PC-3 (cell line): ENCODE measurements at regions of chr1 and their contacts with region 1.

Region 1: GRCh38 chr1:37514350-37515184 is at the start of gene MEAF6:
- DNase-seq: peak; percentile 88
- ATAC-seq: peak; percentile 94
- H3K4me3 ChIP-seq: peak within 1 kb of the TSS; percentile 79
- H3K27ac ChIP-seq: peak within 1 kb of the TSS; percentile 76
- H3K4me1 ChIP-seq: peaks cover 19% of the 10 kb centered on the region
- H3K27me3 ChIP-seq: no peaks in the 10 kb centered on the region
- CTCF ChIP-seq: peak; percentile 71
- total RNA-seq, gene MEAF6: 87.0 and 90.9 TPM in 2 replicates

Region 2: GRCh38 chr1:37465593-37466517 is 48.7 kb before region 1 on chr1:
- CTCF ChIA-PET with region 1: no interaction called
- POLR2A ChIA-PET with region 1: no interaction called
- intact Hi-C with region 1: no loop called
- DNase-seq: no peak
- ATAC-seq: peak; percentile 43; the same call in 1 of the 2 replicates
- H3K4me3 ChIP-seq: no peak overlapping the region
- H3K27ac ChIP-seq: no peak overlapping the region
- H3K4me1 ChIP-seq: no peaks in the 10 kb centered on the region
- H3K27me3 ChIP-seq: no peaks in the 10 kb centered on the region
- CTCF ChIP-seq: no peak

Region 3: DNA sequence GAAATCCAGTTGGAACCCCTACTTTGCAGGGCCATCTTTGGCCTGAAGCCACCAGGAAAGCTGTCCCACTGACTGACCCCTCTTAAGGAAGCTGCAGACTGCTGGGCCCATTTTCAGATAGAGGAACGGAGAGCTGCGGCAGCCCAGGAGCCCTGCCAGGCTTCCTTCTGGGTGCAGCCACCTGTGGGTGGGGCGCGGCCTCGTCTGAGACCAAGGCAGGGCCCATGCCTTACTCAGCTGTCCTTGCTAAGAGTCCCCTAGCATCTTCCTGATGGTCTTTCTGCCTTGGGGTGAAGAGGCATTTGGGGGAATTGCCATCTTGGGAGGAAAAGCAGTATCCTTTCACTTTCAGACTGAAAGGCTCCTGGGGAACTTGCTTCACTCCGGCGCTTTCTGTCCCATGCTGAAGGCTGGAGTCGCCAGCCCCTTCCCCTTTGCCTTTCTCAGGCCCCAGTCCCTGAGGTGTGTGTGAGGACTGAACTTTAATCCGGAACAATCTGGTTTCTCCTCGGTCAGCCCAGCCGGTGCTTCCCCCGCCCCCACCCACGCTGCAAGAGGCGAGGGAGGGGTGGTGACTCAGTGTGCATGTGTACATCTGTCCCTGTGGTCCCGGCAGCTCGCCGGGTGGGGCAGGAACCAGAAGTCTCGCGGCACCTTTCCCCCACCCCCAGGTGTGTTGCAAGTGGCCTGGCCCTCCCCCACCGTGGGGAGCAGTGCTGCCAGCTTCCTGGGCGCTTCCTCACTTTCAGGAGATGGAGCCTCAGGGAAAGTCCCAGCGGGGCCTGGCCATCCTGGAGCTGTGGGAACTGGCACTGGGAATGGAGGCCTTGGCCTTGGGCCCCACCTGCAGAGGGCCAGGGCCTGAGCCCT is 35.1 kb before region 1 on chr1:
- CTCF ChIA-PET with region 1: no interaction called
- POLR2A ChIA-PET with region 1: interaction called, 4 read pairs
- intact Hi-C with region 1: loop called (anchors 2 kb)
- DNase-seq: peak; percentile 98
- ATAC-seq: peak; percentile 42
- H3K4me3 ChIP-seq: peak overlapping the region; percentile 71
- H3K27ac ChIP-seq: peak overlapping the region; percentile 97
- H3K4me1 ChIP-seq: peaks cover 58% of the 10 kb centered on the region
- H3K27me3 ChIP-seq: no peaks in the 10 kb centered on the region
- CTCF ChIP-seq: no peak

Region 4: DNA sequence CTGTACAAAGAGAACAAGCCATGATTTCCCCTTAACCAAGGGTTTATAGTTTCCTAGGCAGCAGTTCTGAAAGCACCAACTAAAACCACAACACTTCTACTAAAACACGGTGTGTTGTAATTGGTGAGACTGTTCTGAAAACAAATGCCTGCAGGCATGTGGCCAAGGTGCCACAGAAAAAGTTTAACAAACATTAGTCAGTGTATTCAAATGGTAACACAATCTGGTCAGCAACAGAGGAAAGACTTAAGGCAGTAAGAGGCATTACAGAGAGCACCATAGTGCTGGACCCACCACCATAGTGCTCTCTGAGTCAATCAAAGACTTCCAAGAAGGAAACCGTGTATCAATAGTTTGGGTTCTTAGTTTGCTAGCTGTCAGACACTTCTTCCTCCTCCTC is 22.8 kb after region 1 on chr1:
- CTCF ChIA-PET with region 1: interaction called, 4 read pairs
- POLR2A ChIA-PET with region 1: no interaction called
- intact Hi-C with region 1: loop called (anchors 2 kb)
- DNase-seq: peak; percentile 94
- ATAC-seq: peak; percentile 80
- H3K4me3 ChIP-seq: no peak overlapping the region
- H3K27ac ChIP-seq: peak overlapping the region; percentile 56
- H3K4me1 ChIP-seq: peaks cover 46% of the 10 kb centered on the region
- H3K27me3 ChIP-seq: no peaks in the 10 kb centered on the region
- CTCF ChIP-seq: no peak

Region 5: DNA sequence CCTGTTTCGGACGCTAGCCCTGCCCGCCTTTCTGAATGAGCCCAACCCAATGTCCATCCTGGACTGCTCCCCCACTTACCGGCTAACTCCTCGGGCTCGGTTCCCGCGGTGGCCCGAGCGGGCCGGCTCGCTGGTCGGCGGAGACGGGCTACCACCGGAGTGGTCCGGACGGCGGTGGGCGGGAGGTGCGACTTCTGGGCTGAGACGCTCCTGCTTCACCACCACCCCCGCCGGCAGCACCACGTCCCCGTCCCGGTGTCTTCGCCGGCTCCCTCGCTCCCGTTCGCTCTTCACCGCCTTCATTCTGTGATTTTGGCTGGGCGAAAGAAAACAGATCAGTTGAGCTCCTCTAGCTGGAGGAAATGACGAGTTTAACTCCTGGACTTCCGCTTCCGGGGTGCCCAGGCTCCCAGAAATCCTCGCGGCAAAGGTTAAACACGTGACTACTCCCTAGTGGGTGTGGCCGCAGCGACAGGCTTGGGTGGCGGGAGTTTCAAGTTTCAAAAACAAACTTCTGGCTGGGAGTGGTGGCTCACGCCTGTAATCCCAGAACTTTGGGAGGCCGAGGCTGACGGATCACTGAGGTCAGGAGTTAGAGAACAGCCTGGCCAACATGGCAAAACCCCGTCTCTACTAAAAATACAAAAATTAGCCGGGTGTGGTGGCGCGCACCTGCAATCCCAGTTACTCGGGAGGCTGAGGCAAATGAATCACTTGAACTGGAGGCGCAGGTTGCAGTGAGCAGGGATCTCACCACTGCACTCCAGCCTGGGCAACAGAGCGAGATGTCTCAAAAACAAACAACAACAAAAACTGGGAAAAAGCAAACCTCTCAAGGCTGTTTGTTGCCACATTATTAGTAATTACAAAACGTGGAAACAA is 39.6 kb after region 1 on chr1 and contains the start of gene SNIP1:
- CTCF ChIA-PET with region 1: interaction called, 10 read pairs
- POLR2A ChIA-PET with region 1: no interaction called
- intact Hi-C with region 1: no loop called
- DNase-seq: peak; percentile 94
- ATAC-seq: peak; percentile 93
- H3K4me3 ChIP-seq: peak within 1 kb of the TSS; percentile 100
- H3K27ac ChIP-seq: peak within 1 kb of the TSS; percentile 59
- H3K4me1 ChIP-seq: peaks cover 20% of the 10 kb centered on the region
- H3K27me3 ChIP-seq: no peaks in the 10 kb centered on the region
- CTCF ChIP-seq: no peak
- total RNA-seq, gene SNIP1: 23.1 and 36.0 TPM in 2 replicates

Region 6: DNA sequence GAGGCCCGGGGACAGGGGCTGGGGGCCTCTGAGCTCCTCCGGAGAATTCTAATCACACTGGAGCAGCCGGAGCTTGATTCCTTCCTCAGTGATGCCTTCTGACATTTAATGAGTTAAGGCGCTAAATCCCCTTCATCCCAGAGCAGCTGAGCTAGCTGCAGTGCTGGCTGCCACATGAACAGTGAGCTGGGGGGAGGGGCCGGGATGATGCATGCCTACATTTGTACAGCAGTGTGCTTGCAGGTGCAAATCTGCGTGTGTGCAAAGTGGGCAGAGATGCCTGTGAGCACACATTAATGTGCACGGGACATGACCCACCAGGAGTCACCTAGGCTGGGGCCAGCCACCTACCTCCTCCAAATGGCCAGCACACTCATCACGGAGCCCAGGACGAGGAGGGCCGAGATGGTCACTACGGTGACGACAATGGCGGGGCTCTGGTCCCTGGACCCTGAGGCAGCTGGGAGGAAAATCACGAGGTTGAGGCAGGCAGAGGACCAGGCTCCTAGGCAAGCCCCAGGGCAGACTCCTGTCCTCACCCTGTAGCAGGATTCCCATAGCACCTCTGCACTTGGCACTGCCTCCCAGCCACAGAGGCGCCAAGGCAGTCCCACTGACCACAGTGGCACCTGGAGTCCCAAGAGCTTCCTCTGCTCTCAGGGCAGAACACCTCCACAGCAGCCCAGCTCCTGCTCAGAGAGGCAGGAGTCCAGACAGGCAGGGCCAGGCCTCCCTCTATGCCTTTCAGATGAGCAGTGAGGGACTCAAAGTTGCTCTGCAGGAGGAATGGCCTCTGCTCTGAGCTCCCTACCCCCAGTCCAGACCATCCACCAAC is 212.4 kb after region 1 on chr1:
- CTCF ChIA-PET with region 1: no interaction called
- POLR2A ChIA-PET with region 1: no interaction called
- intact Hi-C with region 1: no loop called
- DNase-seq: no peak
- ATAC-seq: no peak
- H3K4me3 ChIP-seq: no peak overlapping the region
- H3K27ac ChIP-seq: no peak overlapping the region
- H3K4me1 ChIP-seq: no peaks in the 10 kb centered on the region
- H3K27me3 ChIP-seq: no peaks in the 10 kb centered on the region
- CTCF ChIP-seq: no peak